Left ventricle myocardium inferior (tissue), 1 donor: ENCODE measurements at regions of chr11 and their contacts with region 1.

Region 1: DNA sequence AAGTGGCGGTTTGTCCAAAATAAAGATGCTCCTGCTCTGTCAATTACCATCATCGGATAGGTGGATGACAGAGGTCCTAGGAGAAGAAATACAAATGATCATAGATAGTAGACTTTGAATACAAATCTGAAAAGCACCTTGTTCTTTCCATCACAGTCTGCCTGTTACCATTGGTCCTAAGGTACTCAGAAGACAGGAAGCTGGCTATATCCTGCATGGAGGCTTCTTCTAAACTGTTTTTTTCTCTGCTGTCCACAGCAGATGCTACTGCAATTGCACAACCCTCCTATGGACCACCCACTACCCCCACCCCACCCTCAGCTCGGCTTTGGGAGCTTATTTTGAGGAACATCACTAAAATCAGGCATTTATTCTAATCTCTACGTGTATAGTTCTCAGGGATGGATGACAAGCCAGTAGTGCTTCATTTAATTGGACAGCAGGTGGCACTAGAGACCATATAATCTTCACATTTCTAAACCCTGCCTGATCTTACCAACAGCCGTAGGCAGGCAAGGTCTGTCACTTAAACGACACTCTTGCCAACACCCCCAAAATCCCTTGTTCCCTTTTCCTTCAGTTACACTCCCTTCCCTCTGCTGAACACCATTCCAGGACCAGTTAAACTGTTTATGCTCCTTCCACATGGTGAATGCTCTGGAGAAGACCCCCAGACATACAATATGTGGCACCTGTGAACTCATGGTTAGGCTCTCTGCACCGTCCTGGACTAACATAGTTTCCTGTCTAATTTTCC is 6.6 kb upstream of the PTS start:
- DNase-seq: no peak
- H3K4me3 ChIP-seq: no peak overlapping the region
- H3K27ac ChIP-seq: no peak overlapping the region
- H3K4me1 ChIP-seq: no peaks in the 10 kb centered on the region
- H3K27me3 ChIP-seq: no peaks in the 10 kb centered on the region
- CTCF ChIP-seq: peak; percentile 82

Region 2: DNA sequence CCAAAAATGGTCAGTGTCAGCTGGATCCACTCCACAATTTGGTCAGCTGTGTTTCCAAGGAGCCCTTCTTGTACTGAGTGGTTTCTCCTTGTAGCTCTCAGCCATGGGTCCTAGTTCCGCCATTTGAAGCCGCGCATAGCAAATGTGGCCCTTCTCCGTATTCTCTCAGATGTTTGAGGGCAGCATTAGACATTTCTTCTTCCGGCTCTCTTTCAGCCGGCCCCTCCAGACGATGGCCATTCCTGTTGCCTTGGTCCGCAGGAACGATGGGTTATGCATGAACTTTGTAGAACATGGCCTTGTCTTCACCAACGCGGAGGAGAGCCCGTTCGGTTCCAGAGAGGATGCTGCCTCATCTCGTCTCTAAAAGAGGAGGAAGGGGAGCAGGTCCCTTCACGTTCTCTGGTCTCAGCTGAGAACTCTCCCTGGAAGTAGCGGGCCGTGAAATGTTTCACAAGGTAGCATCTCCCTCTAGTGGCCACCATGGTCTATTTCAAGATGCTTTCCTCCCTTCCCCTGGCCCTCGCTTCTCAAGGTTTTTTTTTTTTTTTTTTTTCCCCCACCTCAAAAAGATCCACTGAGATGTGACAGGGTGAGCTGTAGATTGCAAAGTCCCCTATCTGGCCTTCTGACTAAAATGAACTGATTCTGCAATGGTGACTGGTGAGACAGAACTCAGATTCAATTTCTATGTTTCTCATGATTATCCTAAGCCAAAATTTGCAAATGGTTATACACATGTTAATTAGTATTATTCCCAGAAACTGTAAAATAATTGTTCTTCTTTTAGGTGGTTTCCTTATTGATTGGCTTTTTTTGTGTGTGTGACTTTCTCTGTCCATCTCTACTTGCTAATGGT is 60.8 kb after region 1 on chr11:
- intact Hi-C with region 1: loop called (anchors 2 kb)
- DNase-seq: peak; percentile 25
- H3K4me3 ChIP-seq: peak overlapping the region; percentile 71
- H3K27ac ChIP-seq: peak overlapping the region; percentile 62
- H3K4me1 ChIP-seq: peaks cover 9% of the 10 kb centered on the region
- H3K27me3 ChIP-seq: no peaks in the 10 kb centered on the region
- CTCF ChIP-seq: peak; percentile 66

Region 3: GRCh38 chr11:112292785-112293407 is 73.2 kb after region 1 on chr11:
- intact Hi-C with region 1: no loop called
- DNase-seq: no peak
- H3K4me3 ChIP-seq: no peak overlapping the region
- H3K27ac ChIP-seq: peak overlapping the region; percentile 84
- H3K4me1 ChIP-seq: peaks cover 46% of the 10 kb centered on the region
- H3K27me3 ChIP-seq: no peaks in the 10 kb centered on the region
- CTCF ChIP-seq: no peak